PC-9 (cell line): ENCODE measurements at regions of chr6 and their contacts with region 1.

Region 1: GRCh38 chr6:51792273-51793030 is 295.0 kb downstream of the PKHD1 start:
- DNase-seq: no peak
- H3K4me3 ChIP-seq: no peak overlapping the region
- H3K27ac ChIP-seq: no peak overlapping the region
- H3K4me1 ChIP-seq: no peaks in the 10 kb centered on the region
- H3K27me3 ChIP-seq: no peaks in the 10 kb centered on the region
- CTCF ChIP-seq: no peak

Region 2: DNA sequence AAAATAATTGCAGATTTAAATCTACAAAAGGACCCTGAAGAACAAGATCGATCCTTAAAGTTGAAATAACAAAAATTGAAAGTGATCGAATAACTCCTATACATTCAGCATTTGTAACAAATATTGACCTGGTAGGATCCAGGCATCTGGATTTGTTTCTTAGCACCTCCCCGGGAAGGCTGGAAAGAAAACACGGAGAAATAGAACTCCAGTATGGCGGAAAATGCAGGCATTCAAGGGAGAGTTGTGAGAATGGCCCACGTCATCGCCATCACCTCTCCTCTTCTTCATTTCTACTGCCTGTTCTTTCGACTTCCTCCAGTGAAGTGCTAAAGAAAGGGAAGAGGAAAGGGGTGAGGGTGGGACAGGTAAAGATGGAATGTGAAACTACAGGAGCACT is 1321.4 kb before region 1 on chr6:
- CTCF ChIA-PET with region 1: no interaction called
- POLR2A ChIA-PET with region 1: interaction called, 11 read pairs
- intact Hi-C with region 1: no loop called
- DNase-seq: no peak
- H3K4me3 ChIP-seq: no peak overlapping the region
- H3K27ac ChIP-seq: no peak overlapping the region
- H3K4me1 ChIP-seq: no peaks in the 10 kb centered on the region
- H3K27me3 ChIP-seq: no peaks in the 10 kb centered on the region
- CTCF ChIP-seq: no peak